Endothelial cell of umbilical vein (primary cell): ENCODE measurements at regions of chr11 and their contacts with region 1.

Region 1: GRCh38 chr11:57815877-57816276 is 54.3 kb downstream of the CTNND1 start:
- DNase-seq: no peak
- H3K4me3 ChIP-seq: no peak overlapping the region
- H3K27ac ChIP-seq: no peak overlapping the region
- H3K4me1 ChIP-seq: no peaks in the 10 kb centered on the region
- H3K27me3 ChIP-seq: no peaks in the 10 kb centered on the region
- CTCF ChIP-seq: no peak
- POLR2A ChIP-seq: no peak

Region 2: DNA sequence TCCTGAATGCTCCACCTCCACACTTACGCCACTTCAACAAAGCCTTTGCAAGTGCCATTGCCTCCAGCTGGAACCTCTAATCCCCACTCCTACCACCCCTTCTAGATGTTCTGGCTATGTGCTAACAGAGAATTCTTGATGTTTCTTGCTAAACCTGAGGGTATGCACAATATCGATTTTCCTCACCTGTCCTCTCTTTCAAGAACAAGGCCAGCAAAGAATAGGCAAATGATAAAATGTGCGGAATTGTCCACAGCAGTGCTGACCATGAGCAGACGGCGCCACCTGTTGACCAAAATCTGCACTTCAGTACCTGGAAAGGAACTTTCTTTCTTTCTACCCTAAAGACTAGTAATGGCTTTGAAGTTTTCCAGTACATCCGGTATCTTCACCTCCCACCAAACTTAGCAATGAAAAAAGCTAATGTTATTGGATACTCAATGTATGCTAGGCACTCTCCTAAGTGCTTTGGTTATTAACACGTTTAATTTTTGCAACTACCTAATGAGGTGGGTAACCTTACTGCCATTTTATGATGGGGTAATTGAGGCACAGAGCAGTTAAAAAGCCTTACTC is 288.7 kb before region 1 on chr11:
- CTCF ChIA-PET with region 1: no interaction called
- POLR2A ChIA-PET with region 1: no interaction called
- dilution Hi-C with region 1: no loop called
- intact Hi-C with region 1: no loop called
- DNase-seq: peak; percentile 59
- H3K4me3 ChIP-seq: no peak overlapping the region
- H3K27ac ChIP-seq: no peak overlapping the region
- H3K4me1 ChIP-seq: peaks cover 21% of the 10 kb centered on the region
- H3K27me3 ChIP-seq: no peaks in the 10 kb centered on the region
- CTCF ChIP-seq: peak; percentile 78 to 79
- POLR2A ChIP-seq: no peak

Region 3: GRCh38 chr11:58513747-58514367 is 698.0 kb after region 1 on chr11:
- CTCF ChIA-PET with region 1: interaction called, 8 read pairs
- POLR2A ChIA-PET with region 1: no interaction called
- dilution Hi-C with region 1: no loop called
- intact Hi-C with region 1: loop called (anchors 2 kb)
- DNase-seq: peak; percentile 73
- H3K4me3 ChIP-seq: no peak overlapping the region
- H3K27ac ChIP-seq: no peak overlapping the region
- H3K4me1 ChIP-seq: no peaks in the 10 kb centered on the region
- H3K27me3 ChIP-seq: peaks cover 18 to 32% of the 10 kb centered on the region in 2 experiments
- CTCF ChIP-seq: peak; percentile 57 to 68
- POLR2A ChIP-seq: no peak